ENCODE measurements at regions of chr3 and their contacts with region 1.

Region 1: GRCh38 chr3:58491506-58492402 is at the start of gene KCTD6:
- DNase-seq: peak; percentile 97
- ATAC-seq: peak; percentile 83
- H3K4me3 ChIP-seq: peak within 1 kb of the TSS; percentile 91
- H3K27ac ChIP-seq: no peak within 1 kb of the TSS
- H3K4me1 ChIP-seq: peaks cover 40% of the 10 kb centered on the region
- H3K27me3 ChIP-seq: no peaks in the 10 kb centered on the region
- CTCF ChIP-seq: peak; percentile 55
- total RNA-seq, gene KCTD6: 13.1 and 13.6 TPM in 2 replicates

Region 2: DNA sequence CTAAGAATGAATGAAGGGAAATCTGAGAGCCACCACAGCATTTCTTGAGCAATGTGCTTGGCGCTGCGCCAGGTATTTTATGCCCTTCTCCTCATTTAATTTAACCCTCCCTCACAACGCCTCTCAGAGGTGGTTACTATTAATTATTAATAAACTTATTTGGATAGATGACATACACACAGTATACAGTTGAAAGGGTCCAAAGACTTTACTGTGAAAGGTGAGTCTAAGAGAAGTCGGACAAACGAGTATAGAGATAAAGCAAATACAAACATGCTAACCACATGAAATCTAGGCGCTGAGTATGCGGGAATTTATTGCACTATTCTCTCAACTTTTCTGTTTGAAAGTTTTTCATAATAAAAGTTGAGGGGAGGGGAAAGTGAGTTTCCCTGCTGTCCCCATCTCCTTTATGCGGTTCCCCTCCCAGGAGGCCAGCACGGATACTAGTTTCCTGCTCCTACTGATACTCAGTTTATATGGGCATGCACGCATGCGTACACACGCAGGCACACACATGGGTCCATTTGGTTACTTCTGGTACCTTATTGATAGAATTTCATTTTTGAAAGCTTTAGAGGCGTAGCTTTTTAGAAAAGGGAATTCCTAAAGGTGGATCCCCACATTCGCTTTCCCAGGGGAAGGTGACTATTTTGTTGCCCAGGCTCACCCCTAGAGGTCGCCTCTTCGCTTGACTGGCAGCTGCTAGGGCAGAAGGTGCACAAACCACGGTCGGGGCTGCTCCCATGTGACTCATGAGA is 28.4 kb before region 1 on chr3:
- CTCF ChIA-PET with region 1: interaction called, 4 read pairs
- POLR2A ChIA-PET with region 1: no interaction called
- intact Hi-C with region 1: loop called (anchors 1 kb)
- DNase-seq: peak; percentile 90
- ATAC-seq: peak; percentile 99
- H3K4me3 ChIP-seq: peak overlapping the region; percentile 32
- H3K27ac ChIP-seq: no peak overlapping the region
- H3K4me1 ChIP-seq: peaks cover 14% of the 10 kb centered on the region
- H3K27me3 ChIP-seq: no peaks in the 10 kb centered on the region
- CTCF ChIP-seq: peak; percentile 98

Region 3: GRCh38 chr3:58471025-58471887 is 20.5 kb before region 1 on chr3:
- CTCF ChIA-PET with region 1: interaction called, 4 read pairs
- POLR2A ChIA-PET with region 1: no interaction called
- intact Hi-C with region 1: loop called (anchors 1 kb)
- DNase-seq: peak; percentile 97
- ATAC-seq: peak; percentile 98
- H3K4me3 ChIP-seq: peak overlapping the region; percentile 6; the same call in 1 of the 2 replicates
- H3K27ac ChIP-seq: peak overlapping the region; percentile 83
- H3K4me1 ChIP-seq: peaks cover 27% of the 10 kb centered on the region
- H3K27me3 ChIP-seq: no peaks in the 10 kb centered on the region
- CTCF ChIP-seq: no peak

Region 4: DNA sequence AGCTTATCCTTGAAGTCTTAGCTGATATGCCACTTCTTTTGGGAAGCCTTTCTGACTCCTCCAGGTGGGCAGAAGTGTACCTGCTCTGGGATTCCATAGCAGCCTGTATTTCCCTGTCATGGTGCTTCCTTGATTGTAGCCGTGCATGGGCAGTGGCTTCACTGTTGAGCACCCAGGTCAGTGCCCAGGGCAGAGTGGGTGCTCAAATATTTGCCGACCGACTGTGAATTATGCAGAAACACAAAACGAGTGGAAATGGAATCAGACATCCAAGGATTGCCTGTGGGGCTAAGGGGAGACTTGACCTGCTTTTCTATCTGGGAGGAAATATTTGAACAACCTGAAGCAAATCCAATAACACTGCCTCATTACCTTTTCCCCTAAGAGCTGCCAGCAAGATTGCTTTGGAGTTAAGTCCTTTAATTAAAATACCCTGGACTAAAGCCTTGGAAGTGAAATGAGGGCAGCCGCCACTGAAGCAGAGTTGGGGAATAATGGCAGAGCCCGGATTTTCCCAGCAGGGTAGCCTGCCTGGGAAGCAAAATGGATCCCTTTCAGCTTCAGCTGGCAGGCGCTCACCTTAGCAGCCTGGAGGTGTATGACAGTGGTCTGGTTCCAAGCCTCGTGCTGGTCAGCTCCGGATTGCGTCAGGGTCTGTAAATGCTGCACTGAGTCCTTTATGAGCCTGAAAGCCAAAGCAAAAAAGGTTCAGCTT is 30.3 kb after region 1 on chr3:
- CTCF ChIA-PET with region 1: no interaction called
- POLR2A ChIA-PET with region 1: no interaction called
- intact Hi-C with region 1: no loop called
- DNase-seq: no peak
- ATAC-seq: no peak
- H3K4me3 ChIP-seq: no peak overlapping the region
- H3K27ac ChIP-seq: no peak overlapping the region
- H3K4me1 ChIP-seq: peaks cover 9% of the 10 kb centered on the region
- H3K27me3 ChIP-seq: no peaks in the 10 kb centered on the region
- CTCF ChIP-seq: no peak

Measured in PC-3 (cell line).